BJ (cell line): ENCODE measurements at regions of chr4 and their contacts with region 1.

Region 1: DNA sequence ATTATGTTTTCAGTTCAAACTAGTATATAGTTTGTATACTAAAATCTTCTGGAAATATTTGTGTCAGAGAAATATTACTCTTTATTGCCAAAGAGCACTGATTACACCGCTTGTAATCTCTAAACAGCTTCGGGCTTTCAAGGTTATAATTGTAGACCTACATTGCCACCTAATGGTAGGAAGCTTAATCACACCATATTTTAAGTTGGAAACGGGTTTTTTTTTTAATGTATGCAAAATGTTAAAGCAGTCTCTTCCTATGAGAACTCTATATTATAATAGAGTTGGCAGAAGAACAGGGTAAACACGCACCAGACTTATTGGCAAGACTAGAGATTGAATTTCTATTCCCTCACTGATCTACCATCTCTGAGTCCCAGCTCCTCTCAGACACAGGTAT is 19.5 kb upstream of the NFXL1 start:
- DNase-seq: no peak
- H3K4me3 ChIP-seq: no peak overlapping the region
- H3K27me3 ChIP-seq: no peaks in the 10 kb centered on the region
- CTCF ChIP-seq: peak; percentile 59

Region 2: DNA sequence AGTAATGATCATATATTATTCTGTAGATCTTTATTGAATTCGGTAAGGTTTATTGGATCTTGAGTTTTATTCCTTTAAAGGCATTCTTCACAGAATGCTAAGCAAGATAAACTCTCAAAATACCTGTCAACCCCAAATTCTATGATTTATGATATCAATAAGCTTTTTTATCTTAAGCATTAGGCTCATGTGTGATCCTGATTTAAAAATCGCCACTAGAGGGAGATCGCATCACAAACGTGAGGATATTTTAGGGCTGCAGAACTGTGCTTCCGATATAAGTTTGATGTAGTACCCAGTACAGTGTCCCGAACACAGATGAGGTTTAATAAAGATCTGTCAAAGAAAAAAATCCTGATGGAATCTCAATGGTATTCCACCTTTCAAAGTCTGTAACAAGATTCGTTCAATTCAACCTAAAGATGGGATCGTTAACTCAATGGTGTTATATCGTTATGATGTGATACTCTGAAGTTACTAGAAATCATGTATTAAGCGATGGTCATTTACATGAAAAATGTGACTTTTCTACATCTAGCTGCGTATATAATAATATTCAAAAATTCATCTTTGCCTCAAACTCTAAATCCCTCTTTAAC is 264.9 kb before region 1 on chr4:
- CTCF ChIA-PET with region 1: interaction called, 37 read pairs
- POLR2A ChIA-PET with region 1: no interaction called
- DNase-seq: no peak
- H3K4me3 ChIP-seq: no peak overlapping the region
- H3K27me3 ChIP-seq: no peaks in the 10 kb centered on the region
- CTCF ChIP-seq: peak; percentile 72

Region 3: GRCh38 chr4:47686294-47686872 is 247.5 kb before region 1 on chr4:
- CTCF ChIA-PET with region 1: interaction called, 10 read pairs
- POLR2A ChIA-PET with region 1: no interaction called
- DNase-seq: no peak
- H3K4me3 ChIP-seq: no peak overlapping the region
- H3K27me3 ChIP-seq: peaks cover 1% of the 10 kb centered on the region
- CTCF ChIP-seq: peak; percentile 72